ENCODE measurements at regions of chr1 and their contacts with region 1.

Region 1: GRCh38 chr1:52552505-52553361 is at the start of gene TUT4:
- DNase-seq: peak; percentile 37 to 57 (median 53)
- H3K4me3 ChIP-seq: peak within 1 kb of the TSS; percentile 76 to 93 (median 77)
- H3K4me3 Mint-ChIP-seq: peak within 1 kb of the TSS in 1 of 2 donors; percentile 80
- H3K27ac ChIP-seq: peak within 1 kb of the TSS in 1 of 2 donors; percentile 79
- H3K27ac Mint-ChIP-seq: peak within 1 kb of the TSS in 5 of 7 donors; percentile 60 to 85 (median 68)
- H3K4me1 ChIP-seq: peaks cover 16 to 23% of the 10 kb centered on the region in 2 donors
- H3K4me1 Mint-ChIP-seq: peaks cover 19% of the 10 kb centered on the region
- H3K27me3 ChIP-seq: peaks cover 0 to 6% of the 10 kb centered on the region in 2 donors
- H3K27me3 Mint-ChIP-seq: peaks cover 2 to 6% (median 5%) of the 10 kb centered on the region in 3 donors
- CTCF ChIP-seq: no peak
- polyA plus RNA-seq, gene TUT4: 4.3 to 24.2 (median 7.6) TPM

Region 2: GRCh38 chr1:52511851-52512615 is 40.7 kb before region 1 on chr1:
- intact Hi-C with region 1: no loop called
- DNase-seq: no peak
- H3K4me3 ChIP-seq: no peak overlapping the region
- H3K4me3 Mint-ChIP-seq: no peak overlapping the region
- H3K27ac ChIP-seq: no peak overlapping the region
- H3K27ac Mint-ChIP-seq: no peak overlapping the region
- H3K4me1 ChIP-seq: no peaks in the 10 kb centered on the region
- H3K4me1 Mint-ChIP-seq: no peaks in the 10 kb centered on the region
- H3K27me3 ChIP-seq: no peaks in the 10 kb centered on the region
- H3K27me3 Mint-ChIP-seq: no peaks in the 10 kb centered on the region
- CTCF ChIP-seq: no peak

Region 3: DNA sequence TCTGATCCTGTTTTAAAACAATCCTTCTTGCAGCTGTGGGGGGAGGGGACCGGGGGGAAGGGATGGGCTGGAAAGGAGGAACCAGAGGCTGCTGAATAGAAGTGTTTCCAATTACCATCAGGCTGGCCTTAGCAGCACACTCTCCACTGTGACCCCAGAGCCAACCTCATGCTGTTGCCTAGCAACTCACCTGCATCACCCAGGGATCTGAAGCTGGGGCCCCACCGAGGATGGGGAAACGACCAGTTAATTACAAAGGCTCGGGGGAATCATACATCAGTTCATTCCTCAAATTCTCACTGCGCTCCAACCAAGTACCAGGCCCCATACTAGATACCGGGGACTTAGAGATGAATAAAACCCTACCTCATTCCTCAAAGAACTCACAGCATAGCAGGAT is 37.5 kb after region 1 on chr1:
- intact Hi-C with region 1: no loop called
- DNase-seq: no peak
- H3K4me3 ChIP-seq: no peak overlapping the region
- H3K4me3 Mint-ChIP-seq: no peak overlapping the region
- H3K27ac ChIP-seq: no peak overlapping the region
- H3K27ac Mint-ChIP-seq: peak overlapping the region in 2 of 7 donors; percentile 25 to 46
- H3K4me1 ChIP-seq: peaks cover 24 to 25% of the 10 kb centered on the region in 2 donors
- H3K4me1 Mint-ChIP-seq: peaks cover 36% of the 10 kb centered on the region
- H3K27me3 ChIP-seq: peaks cover 0 to 2% of the 10 kb centered on the region in 2 donors
- H3K27me3 Mint-ChIP-seq: peaks cover 1 to 5% (median 2%) of the 10 kb centered on the region in 3 donors
- CTCF ChIP-seq: no peak

Region 4: GRCh38 chr1:52636721-52637695 is 84.3 kb after region 1 on chr1:
- intact Hi-C with region 1: loop called (anchors 10 kb)
- DNase-seq: peak; percentile 87 to 98 (median 89)
- H3K4me3 ChIP-seq: peak overlapping the region in 1 of 3 experiments; percentile 24
- H3K4me3 Mint-ChIP-seq: peak overlapping the region; percentile 66 to 87
- H3K27ac ChIP-seq: peak overlapping the region in 1 of 2 donors; percentile 82
- H3K27ac Mint-ChIP-seq: peak overlapping the region; percentile 84 to 98 (median 95)
- H3K4me1 ChIP-seq: peaks cover 36 to 51% of the 10 kb centered on the region in 2 donors
- H3K4me1 Mint-ChIP-seq: peaks cover 57% of the 10 kb centered on the region
- H3K27me3 ChIP-seq: peaks cover 15 to 17% of the 10 kb centered on the region in 2 donors
- H3K27me3 Mint-ChIP-seq: peaks cover 20 to 22% (median 22%) of the 10 kb centered on the region in 3 donors
- CTCF ChIP-seq: no peak

Region 5: DNA sequence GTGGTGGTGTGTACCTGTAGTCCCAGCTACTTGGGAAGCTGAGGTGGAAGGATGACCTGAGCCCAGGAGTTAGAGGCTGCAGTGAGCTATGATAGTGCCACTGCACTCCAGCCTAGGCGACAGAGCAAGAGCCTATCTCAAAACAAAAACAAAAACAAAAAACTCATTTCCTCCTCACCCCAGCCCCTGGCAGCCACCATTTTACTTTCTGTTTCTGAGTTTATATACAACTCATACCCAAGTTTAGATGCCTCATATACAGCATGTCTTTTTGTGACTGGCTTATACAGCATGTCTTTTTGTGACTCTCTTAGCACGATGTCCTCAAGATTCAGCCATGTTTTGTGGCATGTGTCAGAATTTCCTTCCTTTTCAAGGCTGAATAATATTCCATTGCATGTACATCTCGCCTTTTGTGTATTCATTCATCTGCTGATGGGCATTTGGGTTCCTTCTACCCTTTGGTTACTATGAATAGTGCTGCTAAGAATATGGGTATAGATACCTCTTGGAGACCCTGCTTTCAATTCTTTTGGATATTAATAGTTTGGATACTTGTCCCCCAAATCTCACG is 130.7 kb after region 1 on chr1:
- intact Hi-C with region 1: loop called in 1 of 2 experiments (anchors 10 kb)
- DNase-seq: no peak
- H3K4me3 ChIP-seq: no peak overlapping the region
- H3K4me3 Mint-ChIP-seq: no peak overlapping the region
- H3K27ac ChIP-seq: no peak overlapping the region
- H3K27ac Mint-ChIP-seq: no peak overlapping the region
- H3K4me1 ChIP-seq: no peaks in the 10 kb centered on the region
- H3K4me1 Mint-ChIP-seq: peaks cover 3% of the 10 kb centered on the region
- H3K27me3 ChIP-seq: no peaks in the 10 kb centered on the region
- H3K27me3 Mint-ChIP-seq: no peaks in the 10 kb centered on the region
- CTCF ChIP-seq: no peak

Region 6: GRCh38 chr1:52904927-52905698 is 352.4 kb after region 1 on chr1:
- intact Hi-C with region 1: no loop called
- DNase-seq: no peak
- H3K4me3 ChIP-seq: no peak overlapping the region
- H3K4me3 Mint-ChIP-seq: no peak overlapping the region
- H3K27ac ChIP-seq: no peak overlapping the region
- H3K27ac Mint-ChIP-seq: peak overlapping the region in 1 of 7 donors; percentile 23
- H3K4me1 ChIP-seq: no peaks in the 10 kb centered on the region
- H3K4me1 Mint-ChIP-seq: no peaks in the 10 kb centered on the region
- H3K27me3 ChIP-seq: no peaks in the 10 kb centered on the region
- H3K27me3 Mint-ChIP-seq: peaks cover 0 to 2% (median 0%) of the 10 kb centered on the region in 3 donors
- CTCF ChIP-seq: peak; percentile 21